ENCODE measurements at regions of chr6 and their contacts with region 1.

Region 1: DNA sequence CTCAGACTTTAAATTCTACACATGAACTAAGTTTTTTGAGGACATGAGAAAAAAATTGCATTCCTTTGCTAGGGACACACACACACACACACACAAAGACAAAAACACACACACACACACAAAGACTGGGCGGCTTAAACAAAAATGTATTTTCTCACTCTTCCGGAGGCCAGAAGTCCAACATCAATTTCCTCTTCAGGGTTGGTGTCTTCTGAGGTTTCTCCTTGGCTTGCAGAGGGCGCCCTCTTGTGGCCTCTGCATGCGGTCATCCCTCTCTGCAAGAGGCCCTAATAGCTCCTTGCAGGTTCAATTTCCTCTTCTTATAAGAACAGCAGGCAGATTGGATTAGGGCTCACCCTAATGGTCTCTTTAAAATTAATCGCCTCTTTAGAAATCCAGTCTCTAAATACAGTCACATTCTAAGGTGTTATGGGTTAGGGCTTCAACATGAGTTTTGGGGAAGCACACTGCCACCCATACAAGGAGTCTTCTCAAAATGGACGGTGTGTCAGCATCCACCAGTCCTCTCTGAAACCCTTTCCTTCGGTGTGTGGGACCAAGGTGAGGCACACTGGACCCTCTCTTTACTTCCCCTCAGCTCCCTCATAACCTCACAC is 61.4 kb downstream of the GPR6 start:
- DNase-seq: peak; percentile 88
- H3K4me3 Mint-ChIP-seq: peak overlapping the region; percentile 77
- H3K27ac Mint-ChIP-seq: peak overlapping the region; percentile 92
- H3K4me1 Mint-ChIP-seq: peaks cover 27% of the 10 kb centered on the region
- H3K27me3 Mint-ChIP-seq: no peaks in the 10 kb centered on the region

Region 2: GRCh38 chr6:109705258-109705657 is 334.2 kb before region 1 on chr6:
- CTCF ChIA-PET with region 1: interaction called, 33 read pairs
- POLR2A ChIA-PET with region 1: interaction called, 3 read pairs
- DNase-seq: peak; percentile 81
- H3K4me3 Mint-ChIP-seq: no peak overlapping the region
- H3K27ac Mint-ChIP-seq: no peak overlapping the region
- H3K4me1 Mint-ChIP-seq: peaks cover 6% of the 10 kb centered on the region
- H3K27me3 Mint-ChIP-seq: no peaks in the 10 kb centered on the region

Region 3: DNA sequence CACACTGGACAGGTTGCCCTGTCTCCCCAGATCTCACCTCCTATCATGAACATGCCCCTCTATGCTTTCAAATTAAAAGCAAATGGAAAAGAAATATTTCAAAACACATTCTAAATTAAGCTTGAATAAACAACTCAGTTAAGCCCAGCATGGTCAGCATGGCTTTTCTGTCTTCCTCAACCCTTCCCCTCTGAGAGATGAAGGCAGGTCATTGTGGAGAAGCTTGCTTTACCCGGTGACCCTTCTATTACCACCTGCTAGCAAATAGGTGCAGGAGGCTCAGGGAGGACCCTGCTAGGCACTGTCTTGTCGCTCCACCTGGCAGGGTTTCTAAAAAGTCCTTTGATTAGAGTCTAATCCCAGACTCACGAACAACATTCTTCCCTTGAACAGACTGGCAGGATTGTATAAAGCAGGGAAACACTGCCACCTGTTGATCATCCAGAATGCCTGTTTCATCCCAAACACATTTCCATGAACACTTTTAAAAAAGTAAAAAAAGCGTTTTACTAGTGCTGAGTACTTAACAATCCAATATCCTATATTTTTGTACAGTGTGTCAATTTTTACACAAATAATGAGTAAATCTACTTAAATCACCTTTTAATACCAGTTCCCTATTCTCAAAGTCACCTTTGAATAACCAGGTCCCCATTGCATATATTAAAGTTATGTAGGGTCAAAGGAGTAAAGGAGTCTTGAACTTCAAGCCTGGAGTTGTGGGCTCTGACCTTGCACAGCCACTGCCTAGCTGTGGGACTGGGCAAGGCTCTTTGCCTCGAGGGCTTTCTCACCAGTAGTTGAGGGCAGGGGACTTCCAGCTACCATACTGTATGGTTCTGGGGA is 14.1 kb after region 1 on chr6:
- CTCF ChIA-PET with region 1: interaction called, 14 read pairs
- POLR2A ChIA-PET with region 1: no interaction called
- DNase-seq: peak; percentile 20
- H3K4me3 Mint-ChIP-seq: no peak overlapping the region
- H3K27ac Mint-ChIP-seq: no peak overlapping the region
- H3K4me1 Mint-ChIP-seq: no peaks in the 10 kb centered on the region
- H3K27me3 Mint-ChIP-seq: peaks cover 12% of the 10 kb centered on the region

Region 4: DNA sequence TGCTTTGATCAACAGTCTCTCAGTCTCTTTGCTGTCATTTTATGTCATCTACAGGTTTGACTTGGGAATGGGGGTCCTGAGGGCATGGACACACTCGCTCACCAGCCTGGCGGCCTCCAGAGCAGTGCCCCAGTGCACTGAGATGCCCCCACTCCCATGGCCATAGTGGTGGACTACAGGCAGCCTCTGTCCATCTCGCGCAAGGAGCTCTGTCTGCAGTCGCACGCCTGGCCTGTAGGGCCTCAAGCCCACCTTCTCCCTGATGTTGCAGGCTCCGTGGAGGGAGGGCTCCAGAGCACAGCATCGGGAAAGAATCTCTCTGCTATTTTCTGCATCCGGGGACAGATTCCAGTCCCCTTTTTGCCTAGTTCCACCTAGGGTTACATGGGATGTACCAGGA is 353.3 kb after region 1 on chr6:
- CTCF ChIA-PET with region 1: interaction called, 11 read pairs
- POLR2A ChIA-PET with region 1: no interaction called
- DNase-seq: no peak
- H3K4me3 Mint-ChIP-seq: no peak overlapping the region
- H3K27ac Mint-ChIP-seq: no peak overlapping the region
- H3K4me1 Mint-ChIP-seq: peaks cover 21% of the 10 kb centered on the region
- H3K27me3 Mint-ChIP-seq: no peaks in the 10 kb centered on the region